GM13977 (cell line): ENCODE measurements at regions of chr12 and their contacts with region 1.

Region 1: GRCh38 chr12:127108360-127109215 is 1158.4 kb upstream of the TMEM132C start:
- DNase-seq: peak; percentile 17
- CTCF ChIP-seq: peak; percentile 47

Region 2: GRCh38 chr12:126582231-126582630 is 526.4 kb before region 1 on chr12:
- in situ Hi-C with region 1: no loop called
- DNase-seq: no peak
- CTCF ChIP-seq: no peak

Region 3: DNA sequence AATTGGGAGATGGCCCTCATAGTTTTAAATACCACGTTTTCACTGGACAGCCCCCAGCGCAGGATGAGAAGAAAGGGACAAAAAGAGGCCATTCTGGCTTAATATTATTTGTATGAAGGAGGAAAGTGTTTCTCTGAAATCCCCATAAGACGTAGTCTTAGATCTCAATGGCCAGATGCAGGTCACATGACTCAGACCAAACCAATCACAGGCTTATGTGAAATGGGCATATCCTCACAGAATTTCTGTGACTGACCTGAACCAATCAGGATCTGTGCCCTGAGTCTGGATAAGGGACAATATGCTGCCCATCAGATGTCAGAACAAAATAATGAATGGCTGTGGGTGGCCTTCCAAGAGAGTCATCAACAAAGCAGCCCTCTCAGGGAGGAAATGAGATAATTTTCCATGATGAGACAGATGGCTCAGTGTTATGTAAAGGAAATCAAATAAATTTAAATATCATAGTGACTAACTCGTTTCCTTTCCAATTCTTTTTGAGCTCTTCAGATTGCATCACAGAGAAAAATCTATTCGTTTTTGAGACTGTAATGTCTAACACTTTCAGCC is 148.9 kb after region 1 on chr12:
- in situ Hi-C with region 1: no loop called
- DNase-seq: no peak
- CTCF ChIP-seq: no peak

Region 4: GRCh38 chr12:127381048-127381668 is 272.6 kb after region 1 on chr12:
- in situ Hi-C with region 1: loop called (anchors 25 kb)
- DNase-seq: peak; percentile 67
- CTCF ChIP-seq: peak; percentile 85